ENCODE measurements at regions of chr7 and their contacts with region 1.

Region 1: GRCh38 chr7:63925623-63926460 is 72.8 kb upstream of the ZNF722 start:
- DNase-seq: peak; percentile 81 to 97 (median 87)
- ATAC-seq: peak; percentile 95
- H3K4me3 ChIP-seq: peak overlapping the region; percentile 84
- H3K4me3 Mint-ChIP-seq: peak overlapping the region; percentile 96
- H3K27ac ChIP-seq: peak overlapping the region; percentile 43 to 87
- H3K27ac Mint-ChIP-seq: peak overlapping the region; percentile 91
- H3K4me1 ChIP-seq: peaks cover 16% of the 10 kb centered on the region
- H3K4me1 Mint-ChIP-seq: peaks cover 25% of the 10 kb centered on the region
- H3K27me3 ChIP-seq: no peaks in the 10 kb centered on the region
- H3K27me3 Mint-ChIP-seq: no peaks in the 10 kb centered on the region
- CTCF ChIP-seq: no peak

Region 2: GRCh38 chr7:64045301-64046040 is 119.6 kb after region 1 on chr7 and contains the start of gene ZNF727:
- CTCF ChIA-PET with region 1: no interaction called
- POLR2A ChIA-PET with region 1: interaction called, 3 read pairs
- intact Hi-C with region 1: loop called in 1 of 2 experiments (anchors 10 kb)
- DNase-seq: peak in 7 of 14 experiments; percentile 2 to 50 (median 28)
- ATAC-seq: peak; percentile 96
- H3K4me3 ChIP-seq: peak within 1 kb of the TSS; percentile 4
- H3K4me3 Mint-ChIP-seq: peak within 1 kb of the TSS; percentile 88
- H3K27ac ChIP-seq: no peak within 1 kb of the TSS
- H3K27ac Mint-ChIP-seq: peak within 1 kb of the TSS; percentile 79
- H3K4me1 ChIP-seq: no peaks in the 10 kb centered on the region
- H3K4me1 Mint-ChIP-seq: peaks cover 9% of the 10 kb centered on the region
- H3K27me3 ChIP-seq: peaks cover 0 to 2% of the 10 kb centered on the region in 2 experiments
- H3K27me3 Mint-ChIP-seq: no peaks in the 10 kb centered on the region
- CTCF ChIP-seq: no peak
- total RNA-seq, gene ZNF727: 0.58 to 0.89 TPM

Region 3: GRCh38 chr7:64313740-64314491 is 388.1 kb after region 1 on chr7 and contains the start of gene ZNF736:
- CTCF ChIA-PET with region 1: no interaction called
- POLR2A ChIA-PET with region 1: interaction called, 15 read pairs
- intact Hi-C with region 1: loop called in 1 of 2 experiments (anchors 2 kb)
- DNase-seq: peak; percentile 76 to 95 (median 82)
- ATAC-seq: peak; percentile 100
- H3K4me3 ChIP-seq: peak within 1 kb of the TSS; percentile 99
- H3K4me3 Mint-ChIP-seq: peak within 1 kb of the TSS; percentile 96
- H3K27ac ChIP-seq: peak within 1 kb of the TSS in 1 of 2 donors; percentile 84
- H3K27ac Mint-ChIP-seq: peak within 1 kb of the TSS; percentile 93
- H3K4me1 ChIP-seq: peaks cover 23% of the 10 kb centered on the region
- H3K4me1 Mint-ChIP-seq: peaks cover 33% of the 10 kb centered on the region
- H3K27me3 ChIP-seq: no peaks in the 10 kb centered on the region
- H3K27me3 Mint-ChIP-seq: no peaks in the 10 kb centered on the region
- CTCF ChIP-seq: no peak
- total RNA-seq, gene ZNF736: 29.9 to 30.8 TPM

Region 4: DNA sequence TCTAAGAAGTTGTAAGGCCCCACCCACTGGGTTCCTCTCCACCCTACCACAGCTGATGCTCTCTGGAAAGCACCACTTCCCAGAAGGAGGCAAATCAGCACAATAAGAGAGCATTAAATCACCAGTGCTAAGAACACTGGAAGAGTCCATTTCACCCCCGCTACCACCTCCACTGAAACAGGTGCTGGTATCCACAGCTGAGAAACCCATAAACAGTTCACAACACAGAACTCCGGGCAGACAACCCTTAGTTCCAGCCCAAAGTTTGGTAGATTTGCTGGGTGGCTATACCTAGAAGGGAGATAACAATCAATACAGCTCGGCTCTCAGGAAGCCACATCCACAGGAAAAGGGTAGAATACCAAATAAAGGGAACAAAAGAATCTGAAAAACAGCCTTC is 602.9 kb after region 1 on chr7:
- CTCF ChIA-PET with region 1: no interaction called
- POLR2A ChIA-PET with region 1: no interaction called
- intact Hi-C with region 1: no loop called
- DNase-seq: no peak
- ATAC-seq: no peak
- H3K4me3 ChIP-seq: no peak overlapping the region
- H3K4me3 Mint-ChIP-seq: no peak overlapping the region
- H3K27ac ChIP-seq: no peak overlapping the region
- H3K27ac Mint-ChIP-seq: no peak overlapping the region
- H3K4me1 ChIP-seq: peaks cover 3% of the 10 kb centered on the region
- H3K4me1 Mint-ChIP-seq: peaks cover 5% of the 10 kb centered on the region
- H3K27me3 ChIP-seq: no peaks in the 10 kb centered on the region
- H3K27me3 Mint-ChIP-seq: no peaks in the 10 kb centered on the region
- CTCF ChIP-seq: no peak

Region 5: GRCh38 chr7:64665980-64666662 is 740.3 kb after region 1 on chr7 and contains the start of gene ZNF107:
- CTCF ChIA-PET with region 1: no interaction called
- POLR2A ChIA-PET with region 1: interaction called, 18 read pairs
- intact Hi-C with region 1: loop called in 1 of 2 experiments (anchors 5 kb)
- DNase-seq: peak; percentile 71 to 96 (median 79)
- ATAC-seq: peak; percentile 95
- H3K4me3 ChIP-seq: peak within 1 kb of the TSS; percentile 83
- H3K4me3 Mint-ChIP-seq: peak within 1 kb of the TSS; percentile 98
- H3K27ac ChIP-seq: peak within 1 kb of the TSS; percentile 82
- H3K27ac Mint-ChIP-seq: peak within 1 kb of the TSS; percentile 98
- H3K4me1 ChIP-seq: peaks cover 23% of the 10 kb centered on the region
- H3K4me1 Mint-ChIP-seq: peaks cover 76% of the 10 kb centered on the region
- H3K27me3 ChIP-seq: no peaks in the 10 kb centered on the region
- H3K27me3 Mint-ChIP-seq: no peaks in the 10 kb centered on the region
- CTCF ChIP-seq: no peak
- total RNA-seq, gene ZNF107: 12.4 TPM

Region 6: DNA sequence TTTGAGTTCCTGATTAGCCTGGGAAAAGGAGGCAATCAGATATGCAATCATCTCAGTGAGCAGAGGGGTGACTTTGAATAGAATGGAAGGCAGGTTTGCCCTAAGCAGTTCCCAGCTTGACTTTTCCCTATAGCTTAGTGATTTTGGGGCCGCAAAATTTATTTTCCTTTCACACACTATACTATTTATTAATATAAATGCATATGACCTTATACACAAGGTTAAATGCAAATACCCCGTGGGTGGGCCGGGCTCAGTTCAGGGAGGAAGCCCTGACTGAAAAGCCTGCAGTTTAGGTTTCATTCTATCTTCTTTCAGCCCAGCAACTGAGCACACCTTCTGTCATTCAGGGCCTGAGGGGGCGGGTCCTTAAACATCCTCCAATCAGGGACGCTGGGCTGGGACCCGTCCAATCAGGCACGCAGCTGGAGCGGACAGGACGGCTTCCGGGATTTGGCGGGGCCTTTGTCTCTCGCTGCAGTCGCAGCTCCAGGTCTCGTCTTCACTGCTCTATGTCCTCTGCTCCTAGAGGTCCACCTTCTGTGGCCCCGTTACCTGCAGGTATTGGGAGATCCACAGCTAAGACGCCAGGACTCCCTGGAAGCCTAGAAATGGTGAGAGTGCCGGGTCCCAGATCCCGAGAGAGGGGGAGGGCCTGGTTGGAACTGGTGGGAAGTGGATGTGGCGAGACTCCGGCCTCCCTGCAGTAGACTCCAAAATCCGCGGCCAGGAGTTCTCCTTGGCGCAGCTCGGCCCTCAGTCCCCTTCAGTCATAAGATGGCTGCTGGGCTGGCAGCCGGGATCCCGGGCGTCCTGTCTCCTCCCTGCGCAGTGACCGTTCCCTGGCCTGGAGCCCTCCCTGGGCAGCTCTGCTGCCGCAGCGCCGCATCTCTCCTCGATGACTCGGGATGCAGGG is 977.2 kb after region 1 on chr7 and contains the start of gene ZNF273:
- CTCF ChIA-PET with region 1: no interaction called
- POLR2A ChIA-PET with region 1: interaction called, 3 read pairs
- intact Hi-C with region 1: loop called in 1 of 2 experiments (anchors 5 kb)
- DNase-seq: peak; percentile 83 to 95 (median 87)
- ATAC-seq: peak; percentile 99
- H3K4me3 ChIP-seq: peak within 1 kb of the TSS; percentile 81
- H3K4me3 Mint-ChIP-seq: peak within 1 kb of the TSS; percentile 99
- H3K27ac ChIP-seq: peak within 1 kb of the TSS; percentile 26 to 64
- H3K27ac Mint-ChIP-seq: peak within 1 kb of the TSS; percentile 94
- H3K4me1 ChIP-seq: peaks cover 14% of the 10 kb centered on the region
- H3K4me1 Mint-ChIP-seq: peaks cover 51% of the 10 kb centered on the region
- H3K27me3 ChIP-seq: no peaks in the 10 kb centered on the region
- H3K27me3 Mint-ChIP-seq: no peaks in the 10 kb centered on the region
- CTCF ChIP-seq: no peak
- total RNA-seq, gene ZNF273: 6.8 TPM

Region 7: DNA sequence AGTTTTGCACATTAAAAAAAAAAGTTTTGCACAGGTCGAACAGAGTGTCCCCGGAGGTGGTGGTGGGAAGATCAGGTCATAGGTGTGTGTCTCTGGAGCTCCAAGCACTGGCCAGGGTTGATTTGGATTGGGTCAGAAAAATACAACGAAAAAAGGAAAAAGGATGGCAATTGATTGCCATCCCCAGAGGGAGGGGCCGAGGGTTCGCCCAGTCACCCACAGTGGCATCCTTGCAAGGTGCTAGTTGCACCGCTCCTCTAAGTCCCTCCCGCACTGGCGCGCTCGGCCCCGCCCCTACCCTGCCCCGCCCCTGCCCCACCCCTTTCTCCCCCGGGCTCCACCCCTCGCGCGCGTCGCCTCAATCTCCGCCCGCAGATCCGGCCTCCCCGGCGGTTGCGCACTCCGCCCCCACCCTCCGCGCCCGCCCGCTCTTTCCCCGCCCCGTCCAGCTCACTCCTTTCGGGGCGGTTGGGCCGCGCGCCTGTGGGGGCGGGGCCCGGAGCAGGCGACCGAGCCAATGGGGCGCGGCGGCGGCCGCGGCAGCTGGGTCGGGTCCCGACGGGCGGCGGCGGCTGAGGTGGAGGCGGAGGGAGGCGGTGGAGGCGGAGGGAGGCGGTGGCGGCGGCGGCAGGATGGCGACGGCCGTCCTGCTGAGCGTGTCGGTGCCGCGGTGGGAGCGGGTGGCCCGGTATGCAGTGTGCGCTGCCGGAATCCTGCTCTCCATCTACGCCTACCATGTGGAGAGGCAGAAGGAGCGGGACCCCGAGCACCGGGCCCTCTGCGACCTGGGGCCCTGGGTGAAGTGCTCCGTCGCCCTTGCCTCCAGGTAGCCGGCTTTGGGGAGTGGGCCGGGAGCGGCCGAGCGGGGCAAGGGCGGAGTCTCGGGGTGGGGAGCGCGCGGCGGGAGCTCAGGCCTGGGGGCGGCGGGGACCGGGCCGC is 1112.2 kb after region 1 on chr7:
- CTCF ChIA-PET with region 1: no interaction called
- POLR2A ChIA-PET with region 1: interaction called, 4 read pairs
- intact Hi-C with region 1: loop called in 1 of 2 experiments (anchors 10 kb)
- DNase-seq: peak; percentile 88 to 98 (median 93)
- ATAC-seq: peak; percentile 87
- H3K4me3 ChIP-seq: peak overlapping the region; percentile 63
- H3K4me3 Mint-ChIP-seq: peak overlapping the region; percentile 86
- H3K27ac ChIP-seq: peak overlapping the region in 1 of 2 donors; percentile 56
- H3K27ac Mint-ChIP-seq: peak overlapping the region; percentile 57
- H3K4me1 ChIP-seq: peaks cover 5% of the 10 kb centered on the region
- H3K4me1 Mint-ChIP-seq: peaks cover 17% of the 10 kb centered on the region
- H3K27me3 ChIP-seq: no peaks in the 10 kb centered on the region
- H3K27me3 Mint-ChIP-seq: no peaks in the 10 kb centered on the region
- CTCF ChIP-seq: no peak

Region 8: GRCh38 chr7:65750511-65751344 is 1824.9 kb after region 1 on chr7:
- CTCF ChIA-PET with region 1: no interaction called
- POLR2A ChIA-PET with region 1: no interaction called
- intact Hi-C with region 1: loop called in 1 of 2 experiments (anchors 10 kb)
- DNase-seq: peak; percentile 70 to 92 (median 84)
- ATAC-seq: peak; percentile 96
- H3K4me3 ChIP-seq: peak overlapping the region; percentile 98
- H3K4me3 Mint-ChIP-seq: peak overlapping the region; percentile 99
- H3K27ac ChIP-seq: peak overlapping the region; percentile 56 to 69
- H3K27ac Mint-ChIP-seq: peak overlapping the region; percentile 96
- H3K4me1 ChIP-seq: peaks cover 25% of the 10 kb centered on the region
- H3K4me1 Mint-ChIP-seq: peaks cover 33% of the 10 kb centered on the region
- H3K27me3 ChIP-seq: no peaks in the 10 kb centered on the region
- H3K27me3 Mint-ChIP-seq: no peaks in the 10 kb centered on the region
- CTCF ChIP-seq: no peak

Measured in CD4-positive, alpha-beta T cell (primary cell).